CD14-positive monocyte (primary cell): ENCODE measurements at regions of chr12 and their contacts with region 1.

Region 1: DNA sequence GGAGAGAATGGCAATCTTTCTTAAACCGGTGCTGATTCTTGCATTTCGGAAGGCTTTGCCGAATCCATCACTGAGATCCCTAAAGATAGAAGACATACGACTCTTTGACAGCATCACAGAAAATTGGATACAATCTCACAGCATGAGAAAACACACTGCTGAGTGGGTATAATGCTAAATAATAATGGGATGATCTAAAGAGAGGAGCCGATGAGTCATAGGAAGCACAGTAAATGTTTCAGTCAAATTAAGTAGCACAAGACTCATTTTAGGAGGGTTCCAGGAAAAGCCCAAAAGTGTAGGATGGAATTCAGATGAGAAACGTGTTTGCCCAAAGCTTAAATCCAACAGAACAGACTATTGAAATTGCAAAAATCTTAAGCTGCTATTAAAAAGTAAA is 81.7 kb downstream of the CPNE8 start:
- DNase-seq: no peak
- H3K4me3 ChIP-seq: no peak overlapping the region
- H3K4me3 Mint-ChIP-seq: no peak overlapping the region
- H3K27ac ChIP-seq: no peak overlapping the region
- H3K27ac Mint-ChIP-seq: no peak overlapping the region
- H3K4me1 ChIP-seq: no peaks in the 10 kb centered on the region
- H3K4me1 Mint-ChIP-seq: peaks cover 9% of the 10 kb centered on the region
- H3K27me3 ChIP-seq: no peaks in the 10 kb centered on the region
- H3K27me3 Mint-ChIP-seq: no peaks in the 10 kb centered on the region
- CTCF ChIP-seq: no peak

Region 2: GRCh38 chr12:38809832-38810231 is 13.9 kb before region 1 on chr12:
- intact Hi-C with region 1: loop called in 1 of 2 experiments (anchors 2 kb)
- DNase-seq: no peak
- H3K4me3 ChIP-seq: no peak overlapping the region
- H3K4me3 Mint-ChIP-seq: no peak overlapping the region
- H3K27ac ChIP-seq: no peak overlapping the region
- H3K27ac Mint-ChIP-seq: peak overlapping the region in 2 of 7 donors; percentile 1 to 33
- H3K4me1 ChIP-seq: no peaks in the 10 kb centered on the region
- H3K4me1 Mint-ChIP-seq: peaks cover 14% of the 10 kb centered on the region
- H3K27me3 ChIP-seq: no peaks in the 10 kb centered on the region
- H3K27me3 Mint-ChIP-seq: no peaks in the 10 kb centered on the region
- CTCF ChIP-seq: no peak